Activated naive CD4-positive, alpha-beta T cell treated with anti-CD3 and anti-CD28 coated beads, Interleukin-2, amount 10 ng/mL, durations not matched to agents 7 days and 5 days (primary cell): ENCODE measurements at regions of chr6 and their contacts with region 1.

Region 1: GRCh38 chr6:41318654-41319565 is 16.5 kb upstream of the NCR2 start:
- DNase-seq: peak; percentile 89
- H3K4me3 Mint-ChIP-seq: peak overlapping the region; percentile 2
- H3K27ac Mint-ChIP-seq: no peak overlapping the region
- H3K4me1 Mint-ChIP-seq: peaks cover 24% of the 10 kb centered on the region
- H3K27me3 Mint-ChIP-seq: peaks cover 31% of the 10 kb centered on the region

Region 2: GRCh38 chr6:41182069-41183034 is 136.6 kb before region 1 on chr6:
- CTCF ChIA-PET with region 1: interaction called, 10 read pairs
- DNase-seq: peak; percentile 75
- H3K4me3 Mint-ChIP-seq: no peak overlapping the region
- H3K27ac Mint-ChIP-seq: no peak overlapping the region
- H3K4me1 Mint-ChIP-seq: peaks cover 45% of the 10 kb centered on the region
- H3K27me3 Mint-ChIP-seq: peaks cover 19% of the 10 kb centered on the region

Region 3: DNA sequence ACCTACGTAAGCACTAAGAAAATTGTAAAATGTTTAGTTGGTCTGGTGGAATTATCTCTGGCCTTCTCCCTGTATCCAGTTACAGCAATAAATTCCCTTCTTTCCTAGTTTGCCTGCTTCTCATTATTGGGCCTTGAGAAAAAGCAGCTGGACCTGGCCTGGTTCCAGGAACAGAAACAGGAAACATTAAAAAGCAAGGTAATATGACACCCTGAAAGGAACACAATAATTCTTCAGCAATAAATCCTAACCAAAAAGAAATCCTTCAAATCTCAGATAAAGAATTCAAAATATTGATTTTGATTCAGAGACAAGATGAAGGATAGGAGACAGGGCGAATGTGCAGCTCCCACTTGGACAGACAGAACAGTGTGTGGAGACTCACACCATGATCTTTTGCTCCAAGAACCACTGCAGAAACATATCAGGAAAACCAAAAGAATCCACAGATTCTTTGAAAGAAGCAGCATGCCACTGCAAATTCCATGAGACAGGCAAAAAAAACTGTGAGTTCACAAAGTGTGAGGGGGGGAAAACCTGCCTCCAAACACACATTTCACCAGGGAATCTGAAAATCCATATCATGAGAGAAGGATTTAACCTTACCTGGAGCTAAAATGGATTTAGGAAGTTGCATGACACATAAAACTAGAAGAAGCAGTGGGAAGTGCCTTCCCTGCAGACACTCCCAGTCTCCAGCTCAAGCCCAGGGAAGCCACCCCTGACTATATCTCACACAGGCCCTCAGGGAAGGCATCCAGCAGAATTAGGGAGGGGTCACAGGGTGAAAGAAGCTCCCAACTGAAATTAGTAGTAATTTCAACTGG is 61.3 kb before region 1 on chr6:
- CTCF ChIA-PET with region 1: no interaction called
- DNase-seq: no peak
- H3K4me3 Mint-ChIP-seq: no peak overlapping the region
- H3K27ac Mint-ChIP-seq: no peak overlapping the region
- H3K4me1 Mint-ChIP-seq: peaks cover 7% of the 10 kb centered on the region
- H3K27me3 Mint-ChIP-seq: peaks cover 29% of the 10 kb centered on the region

Region 4: GRCh38 chr6:41278699-41279405 is 40.1 kb before region 1 on chr6:
- CTCF ChIA-PET with region 1: interaction called, 21 read pairs
- DNase-seq: peak; percentile 81
- H3K4me3 Mint-ChIP-seq: no peak overlapping the region
- H3K27ac Mint-ChIP-seq: no peak overlapping the region
- H3K4me1 Mint-ChIP-seq: peaks cover 10% of the 10 kb centered on the region
- H3K27me3 Mint-ChIP-seq: peaks cover 54% of the 10 kb centered on the region

Region 5: GRCh38 chr6:41306187-41306854 is 12.6 kb before region 1 on chr6:
- CTCF ChIA-PET with region 1: interaction called, 72 read pairs
- DNase-seq: peak; percentile 65
- H3K4me3 Mint-ChIP-seq: no peak overlapping the region
- H3K27ac Mint-ChIP-seq: no peak overlapping the region
- H3K4me1 Mint-ChIP-seq: peaks cover 18% of the 10 kb centered on the region
- H3K27me3 Mint-ChIP-seq: peaks cover 46% of the 10 kb centered on the region

Region 6: GRCh38 chr6:41334482-41335040 is 15.7 kb after region 1 on chr6:
- CTCF ChIA-PET with region 1: interaction called, 17 read pairs
- DNase-seq: no peak
- H3K4me3 Mint-ChIP-seq: no peak overlapping the region
- H3K27ac Mint-ChIP-seq: no peak overlapping the region
- H3K4me1 Mint-ChIP-seq: peaks cover 32% of the 10 kb centered on the region
- H3K27me3 Mint-ChIP-seq: peaks cover 35% of the 10 kb centered on the region

Region 7: DNA sequence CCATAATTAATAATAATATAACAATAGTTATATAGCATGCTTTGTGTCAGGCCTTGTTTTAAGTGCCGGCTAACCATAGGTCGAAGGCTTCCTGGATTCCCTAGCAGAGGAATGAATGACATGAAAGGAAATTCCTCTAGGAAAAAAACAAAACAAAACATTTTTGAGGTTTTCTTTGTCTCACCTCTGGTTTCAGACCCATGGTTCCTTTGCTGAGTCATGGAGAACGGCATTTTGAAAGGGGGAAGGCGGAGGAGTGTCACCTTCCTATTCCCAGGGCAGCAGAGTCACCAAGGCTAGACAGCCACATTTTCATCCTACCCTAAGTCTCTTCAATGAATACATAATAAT is 648.0 kb after region 1 on chr6:
- CTCF ChIA-PET with region 1: no interaction called
- DNase-seq: no peak
- H3K4me3 Mint-ChIP-seq: no peak overlapping the region
- H3K27ac Mint-ChIP-seq: no peak overlapping the region
- H3K4me1 Mint-ChIP-seq: peaks cover 57% of the 10 kb centered on the region
- H3K27me3 Mint-ChIP-seq: no peaks in the 10 kb centered on the region